MCF 10A (cell line): ENCODE measurements at regions of chr6 and their contacts with region 1.

Region 1: GRCh38 chr6:134063966-134064445 is 11.6 kb upstream of the SLC2A12 start:
- DNase-seq: peak; percentile 73
- H3K4me3 Mint-ChIP-seq: no peak overlapping the region
- H3K27ac Mint-ChIP-seq: no peak overlapping the region
- H3K4me1 Mint-ChIP-seq: peaks cover 11% of the 10 kb centered on the region
- H3K27me3 Mint-ChIP-seq: no peaks in the 10 kb centered on the region
- CTCF ChIP-seq: peak; percentile 84

Region 2: DNA sequence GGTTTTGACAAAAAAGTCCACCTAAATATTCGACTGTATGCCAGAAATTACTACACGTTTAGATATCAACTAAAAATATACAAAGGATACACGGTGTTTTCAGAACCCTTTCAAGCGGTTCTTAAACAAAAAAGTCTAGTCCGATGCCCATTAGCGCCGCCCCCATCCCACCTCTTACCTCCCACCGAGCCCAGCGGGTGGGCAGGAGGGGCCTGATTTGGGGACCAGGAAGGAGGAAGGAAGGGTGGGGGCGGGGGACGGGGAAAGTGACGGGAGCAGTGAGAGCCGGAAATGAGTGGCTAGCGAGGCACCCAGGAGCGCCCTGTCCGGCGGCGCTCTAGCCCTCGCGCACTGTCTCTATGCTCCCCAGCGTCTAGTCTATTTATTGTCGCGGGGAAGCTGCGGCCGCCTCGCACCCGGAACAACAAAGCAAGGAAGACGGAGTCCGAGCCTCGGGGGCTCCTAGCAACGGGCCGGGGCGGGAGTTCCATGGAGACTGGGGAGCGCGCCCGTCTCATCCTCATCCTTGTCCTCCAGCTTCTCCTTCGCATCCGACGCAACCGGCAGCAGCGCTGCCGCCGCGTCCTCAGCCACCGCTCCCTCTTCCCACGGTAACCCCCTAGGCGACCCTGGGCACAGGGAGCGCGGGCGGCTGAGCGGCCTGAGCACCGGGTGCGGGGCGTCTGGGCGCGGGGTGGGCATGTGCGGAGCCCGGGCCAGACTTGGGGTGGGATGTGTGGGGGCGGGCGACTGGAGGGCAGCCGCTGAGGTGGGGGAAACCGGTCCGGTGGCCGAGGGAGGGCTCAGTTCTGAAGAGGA is 111.0 kb before region 1 on chr6 and contains the start of gene TBPL1:
- CTCF ChIA-PET with region 1: interaction called, 12 read pairs
- POLR2A ChIA-PET with region 1: interaction called, 42 read pairs
- intact Hi-C with region 1: no loop called
- DNase-seq: peak; percentile 95
- H3K4me3 Mint-ChIP-seq: peak within 1 kb of the TSS; percentile 94
- H3K27ac Mint-ChIP-seq: peak within 1 kb of the TSS; percentile 88
- H3K4me1 Mint-ChIP-seq: peaks cover 36% of the 10 kb centered on the region
- H3K27me3 Mint-ChIP-seq: no peaks in the 10 kb centered on the region
- CTCF ChIP-seq: no peak
- total RNA-seq, gene TBPL1: 40.9 and 51.8 TPM in 2 replicates

Region 3: DNA sequence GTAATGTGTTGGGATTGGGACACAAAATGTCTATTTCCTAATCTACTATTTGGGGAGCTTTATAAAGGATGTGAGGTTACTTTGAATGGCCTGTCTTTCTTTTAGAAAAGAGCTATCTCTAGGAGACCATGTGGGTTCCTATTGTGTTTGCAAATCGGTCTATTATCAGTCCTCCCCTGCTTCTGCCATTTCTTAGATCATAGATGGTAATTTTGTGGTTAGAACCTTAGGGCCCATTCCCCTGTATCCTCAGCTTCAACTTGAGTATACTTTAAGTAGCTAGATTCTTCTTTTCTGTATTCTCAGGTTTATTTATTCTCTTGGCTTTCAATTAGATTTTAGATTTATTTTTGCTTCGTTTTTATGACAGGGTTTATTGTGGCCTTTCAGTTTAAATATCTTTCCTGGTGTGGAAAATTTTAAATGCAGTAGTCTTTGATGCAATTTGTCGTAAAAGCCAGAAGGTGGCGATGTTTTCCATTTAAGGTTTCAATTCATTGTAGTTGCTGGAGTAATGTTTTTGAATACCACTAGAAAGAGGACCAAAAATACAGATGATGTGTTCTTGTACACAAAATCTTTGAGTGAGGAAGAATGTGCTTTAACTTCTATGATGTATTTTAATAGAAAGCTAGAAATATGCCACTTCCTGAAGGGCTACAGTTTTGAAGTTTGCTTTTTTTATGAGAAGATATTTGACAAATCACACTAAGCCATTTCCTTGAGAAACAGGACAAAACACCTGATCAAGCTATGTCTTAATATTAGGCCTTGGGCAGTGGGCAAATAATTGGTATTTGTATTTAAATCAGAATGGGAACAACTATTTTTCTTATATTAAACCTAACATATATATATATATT is 90.7 kb before region 1 on chr6:
- CTCF ChIA-PET with region 1: interaction called, 179 read pairs
- POLR2A ChIA-PET with region 1: interaction called, 35 read pairs
- intact Hi-C with region 1: loop called (anchors 1 kb)
- DNase-seq: peak; percentile 67
- H3K4me3 Mint-ChIP-seq: no peak overlapping the region
- H3K27ac Mint-ChIP-seq: no peak overlapping the region
- H3K4me1 Mint-ChIP-seq: peaks cover 13% of the 10 kb centered on the region
- H3K27me3 Mint-ChIP-seq: no peaks in the 10 kb centered on the region
- CTCF ChIP-seq: peak; percentile 38

Region 4: GRCh38 chr6:133991096-133991593 is 72.9 kb before region 1 on chr6:
- CTCF ChIA-PET with region 1: interaction called, 38 read pairs
- POLR2A ChIA-PET with region 1: interaction called, 3 read pairs
- intact Hi-C with region 1: no loop called
- DNase-seq: peak; percentile 72
- H3K4me3 Mint-ChIP-seq: no peak overlapping the region
- H3K27ac Mint-ChIP-seq: no peak overlapping the region
- H3K4me1 Mint-ChIP-seq: no peaks in the 10 kb centered on the region
- H3K27me3 Mint-ChIP-seq: no peaks in the 10 kb centered on the region
- CTCF ChIP-seq: no peak

Region 5: DNA sequence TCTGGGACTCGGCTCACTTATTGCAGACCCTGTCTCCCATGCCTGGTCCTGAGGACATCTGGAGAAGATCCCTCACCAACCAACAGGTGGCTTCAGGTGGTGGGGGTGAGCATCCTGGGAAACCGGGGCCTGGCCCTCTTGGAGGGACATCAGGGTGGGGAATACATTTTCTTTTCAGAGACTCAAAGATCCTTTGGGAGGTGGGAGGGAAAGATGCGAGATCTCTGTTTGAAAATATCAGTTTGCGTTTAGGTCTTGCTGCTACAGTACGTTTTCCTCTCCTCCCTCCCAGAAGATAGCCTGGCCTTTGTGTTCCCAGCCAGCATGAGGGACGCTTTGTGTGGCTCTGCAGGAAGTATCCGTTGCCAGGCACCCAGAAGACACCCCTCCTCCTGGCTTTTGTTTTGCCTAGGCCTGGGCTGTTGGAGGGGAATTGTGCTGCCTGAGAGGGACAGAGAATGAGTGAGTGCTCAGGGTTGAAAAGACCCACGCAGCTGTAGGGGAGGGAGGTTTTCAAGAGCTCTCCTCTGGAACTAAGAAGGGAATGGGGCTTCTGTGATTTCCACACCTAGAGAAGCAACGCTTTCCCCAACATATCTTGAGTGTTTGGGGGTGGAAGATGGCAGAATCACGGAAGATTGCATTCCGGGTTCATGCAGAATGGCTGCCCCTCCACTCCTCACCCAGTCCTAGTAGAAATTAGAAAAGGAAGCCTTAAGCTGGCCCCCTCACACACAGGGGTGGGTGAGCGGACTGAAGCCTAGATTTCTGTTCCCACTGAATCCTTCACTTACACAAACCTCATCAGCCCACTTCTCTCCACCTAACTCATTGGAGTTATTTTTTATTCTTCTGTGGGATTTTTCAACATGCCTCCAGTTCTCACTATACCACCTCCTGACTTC is 10.4 kb after region 1 on chr6:
- CTCF ChIA-PET with region 1: interaction called, 28 read pairs
- POLR2A ChIA-PET with region 1: no interaction called
- intact Hi-C with region 1: no loop called
- DNase-seq: no peak
- H3K4me3 Mint-ChIP-seq: no peak overlapping the region
- H3K27ac Mint-ChIP-seq: no peak overlapping the region
- H3K4me1 Mint-ChIP-seq: no peaks in the 10 kb centered on the region
- H3K27me3 Mint-ChIP-seq: no peaks in the 10 kb centered on the region
- CTCF ChIP-seq: no peak